ENCODE measurements at regions of chr11 and their contacts with region 1.

Region 1: GRCh38 chr11:662689-663274 is 25.7 kb downstream of the DRD4 start:
- DNase-seq: peak; percentile 35
- H3K4me3 ChIP-seq: no peak overlapping the region
- H3K27ac ChIP-seq: no peak overlapping the region
- H3K4me1 ChIP-seq: peaks cover 16% of the 10 kb centered on the region
- H3K27me3 ChIP-seq: no peaks in the 10 kb centered on the region
- CTCF ChIP-seq: peak; percentile 74 to 78

Region 2: GRCh38 chr11:506238-506994 is 156.4 kb before region 1 on chr11:
- CTCF ChIA-PET with region 1: no interaction called
- dilution Hi-C with region 1: loop called (anchors 25 kb)
- in situ Hi-C with region 1: no loop called
- intact Hi-C with region 1: no loop called
- DNase-seq: peak; percentile 96
- H3K4me3 ChIP-seq: peak overlapping the region; percentile 84 to 96 (median 92)
- H3K27ac ChIP-seq: peak overlapping the region; percentile 97
- H3K4me1 ChIP-seq: peaks cover 35% of the 10 kb centered on the region
- H3K27me3 ChIP-seq: no peaks in the 10 kb centered on the region
- CTCF ChIP-seq: no peak

Region 3: GRCh38 chr11:615504-616319 is 47.1 kb before region 1 on chr11 and contains the start of gene IRF7:
- CTCF ChIA-PET with region 1: no interaction called
- dilution Hi-C with region 1: loop called (anchors 5 kb)
- in situ Hi-C with region 1: no loop called
- intact Hi-C with region 1: no loop called
- DNase-seq: peak; percentile 82
- H3K4me3 ChIP-seq: peak within 1 kb of the TSS; percentile 55 to 90 (median 60)
- H3K27ac ChIP-seq: peak within 1 kb of the TSS; percentile 71
- H3K4me1 ChIP-seq: peaks cover 22% of the 10 kb centered on the region
- H3K27me3 ChIP-seq: no peaks in the 10 kb centered on the region
- CTCF ChIP-seq: no peak
- total RNA-seq, gene IRF7: 1.0 to 4.4 TPM

Region 4: GRCh38 chr11:645536-645935 is 17.2 kb before region 1 on chr11:
- CTCF ChIA-PET with region 1: no interaction called
- dilution Hi-C with region 1: no loop called
- in situ Hi-C with region 1: no loop called
- intact Hi-C with region 1: no loop called
- DNase-seq: no peak
- H3K4me3 ChIP-seq: no peak overlapping the region
- H3K27ac ChIP-seq: no peak overlapping the region
- H3K4me1 ChIP-seq: no peaks in the 10 kb centered on the region
- H3K27me3 ChIP-seq: no peaks in the 10 kb centered on the region
- CTCF ChIP-seq: no peak

Region 5: DNA sequence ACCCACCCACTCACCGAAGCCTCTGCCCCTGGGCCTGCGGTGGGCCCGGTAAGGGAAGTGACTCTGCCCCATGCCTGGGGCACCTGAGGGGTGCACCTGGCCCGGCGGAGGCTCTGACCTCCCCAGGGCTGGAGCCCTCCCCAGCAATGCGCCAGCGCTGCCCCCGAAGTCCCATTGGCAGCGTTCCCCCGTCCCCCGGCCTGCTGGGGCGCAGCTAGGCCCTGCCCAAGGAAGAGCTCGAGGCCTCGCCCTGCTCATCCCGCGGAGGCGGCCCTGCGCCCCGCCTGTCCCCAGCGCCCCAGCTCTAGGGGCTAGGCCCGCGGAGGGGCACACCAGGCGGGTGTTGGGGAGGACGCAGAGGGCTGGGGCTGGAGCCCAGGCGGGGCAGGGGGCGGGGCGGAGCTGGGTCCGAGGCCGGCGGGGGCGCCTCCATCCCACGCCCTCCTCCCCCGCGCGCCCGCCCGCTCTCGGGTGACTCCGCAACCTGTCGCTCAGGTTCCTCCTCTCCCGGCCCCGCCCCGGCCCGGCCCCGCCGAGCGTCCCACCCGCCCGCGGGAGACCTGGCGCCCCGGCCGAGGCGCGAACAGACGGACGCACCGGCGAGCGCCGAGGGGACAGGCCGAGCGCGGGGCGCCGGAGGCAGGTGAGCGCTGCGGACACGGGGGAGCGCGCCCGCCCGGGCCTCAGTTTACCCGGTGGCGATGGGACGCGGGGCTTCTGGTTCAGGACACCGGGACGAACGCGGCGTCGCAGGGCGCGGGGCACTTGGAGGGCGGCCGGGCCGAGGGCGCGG is 43.1 kb after region 1 on chr11 and contains the start of gene EPS8L2:
- CTCF ChIA-PET with region 1: interaction called, 15 read pairs
- dilution Hi-C with region 1: no loop called
- in situ Hi-C with region 1: no loop called
- intact Hi-C with region 1: no loop called
- DNase-seq: peak; percentile 56
- H3K4me3 ChIP-seq: peak within 1 kb of the TSS; percentile 58 to 95 (median 92)
- H3K27ac ChIP-seq: peak within 1 kb of the TSS; percentile 61
- H3K4me1 ChIP-seq: peaks cover 70% of the 10 kb centered on the region
- H3K27me3 ChIP-seq: no peaks in the 10 kb centered on the region
- CTCF ChIP-seq: no peak
- total RNA-seq, gene EPS8L2: 202 to 214 TPM

Region 6: GRCh38 chr11:765025-765801 is 102.4 kb after region 1 on chr11:
- CTCF ChIA-PET with region 1: no interaction called
- dilution Hi-C with region 1: no loop called
- in situ Hi-C with region 1: no loop called
- intact Hi-C with region 1: loop called (anchors 1 kb)
- DNase-seq: peak; percentile 19
- H3K4me3 ChIP-seq: no peak overlapping the region
- H3K27ac ChIP-seq: no peak overlapping the region
- H3K4me1 ChIP-seq: peaks cover 20% of the 10 kb centered on the region
- H3K27me3 ChIP-seq: no peaks in the 10 kb centered on the region
- CTCF ChIP-seq: peak; percentile 36 to 62

Region 7: GRCh38 chr11:783581-784015 is 120.8 kb after region 1 on chr11:
- CTCF ChIA-PET with region 1: no interaction called
- dilution Hi-C with region 1: no loop called
- in situ Hi-C with region 1: no loop called
- intact Hi-C with region 1: loop called (anchors 1 kb)
- DNase-seq: peak; percentile 72
- H3K4me3 ChIP-seq: no peak overlapping the region
- H3K27ac ChIP-seq: no peak overlapping the region
- H3K4me1 ChIP-seq: peaks cover 32% of the 10 kb centered on the region
- H3K27me3 ChIP-seq: no peaks in the 10 kb centered on the region
- CTCF ChIP-seq: peak; percentile 69 to 81

Region 8: GRCh38 chr11:1060824-1061616 is 398.2 kb after region 1 on chr11:
- CTCF ChIA-PET with region 1: no interaction called
- dilution Hi-C with region 1: no loop called
- in situ Hi-C with region 1: no loop called
- intact Hi-C with region 1: no loop called
- DNase-seq: peak; percentile 46
- H3K4me3 ChIP-seq: no peak overlapping the region
- H3K27ac ChIP-seq: peak overlapping the region; percentile 2
- H3K4me1 ChIP-seq: peaks cover 10% of the 10 kb centered on the region
- H3K27me3 ChIP-seq: peaks cover 2% of the 10 kb centered on the region
- CTCF ChIP-seq: no peak